ENCODE measurements at regions of chr17 and their contacts with region 1.

Region 1: DNA sequence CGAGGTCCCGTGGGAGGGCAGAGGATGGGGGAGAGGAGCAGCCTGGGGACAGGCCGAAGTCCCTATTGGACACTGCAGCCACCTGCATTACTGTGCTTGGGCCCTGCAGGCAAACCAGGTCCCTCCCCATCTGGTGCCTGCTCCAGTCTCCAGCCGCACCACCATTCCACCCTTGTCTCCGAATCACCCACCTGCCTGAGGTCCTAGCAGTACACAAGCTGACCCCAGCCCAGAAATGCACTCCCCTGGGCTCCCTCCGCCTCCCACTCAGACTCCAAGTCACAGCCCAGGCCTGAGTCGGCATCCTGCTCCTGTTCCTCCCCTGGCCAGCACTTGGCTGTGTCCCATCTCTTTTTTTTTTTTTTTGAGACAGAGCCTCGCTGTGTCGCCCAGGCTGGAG is 6.3 kb downstream of the UNC13D start:
- DNase-seq: no peak
- H3K4me3 ChIP-seq: no peak overlapping the region
- H3K27ac ChIP-seq: no peak overlapping the region
- H3K4me1 ChIP-seq: no peaks in the 10 kb centered on the region
- H3K27me3 ChIP-seq: no peaks in the 10 kb centered on the region
- CTCF ChIP-seq: no peak
- POLR2A ChIP-seq: no peak

Region 2: GRCh38 chr17:75821552-75821951 is 16.3 kb before region 1 on chr17:
- intact Hi-C with region 1: loop called (anchors 1 kb)
- DNase-seq: no peak
- H3K4me3 ChIP-seq: no peak overlapping the region
- H3K27ac ChIP-seq: peak overlapping the region; percentile 55 to 73
- H3K4me1 ChIP-seq: peaks cover 4 to 23% of the 10 kb centered on the region in 2 donors
- H3K27me3 ChIP-seq: no peaks in the 10 kb centered on the region
- CTCF ChIP-seq: no peak
- POLR2A ChIP-seq: no peak